AG04450 (cell line): ENCODE measurements at regions of chr16 and their contacts with region 1.

Region 1: GRCh38 chr16:58755989-58756649 is 22.0 kb upstream of the GOT2 start:
- DNase-seq: peak; percentile 38
- H3K4me3 ChIP-seq: no peak overlapping the region
- H3K27ac ChIP-seq: no peak overlapping the region
- H3K27me3 ChIP-seq: peaks cover 4% of the 10 kb centered on the region
- CTCF ChIP-seq: peak; percentile 83

Region 2: DNA sequence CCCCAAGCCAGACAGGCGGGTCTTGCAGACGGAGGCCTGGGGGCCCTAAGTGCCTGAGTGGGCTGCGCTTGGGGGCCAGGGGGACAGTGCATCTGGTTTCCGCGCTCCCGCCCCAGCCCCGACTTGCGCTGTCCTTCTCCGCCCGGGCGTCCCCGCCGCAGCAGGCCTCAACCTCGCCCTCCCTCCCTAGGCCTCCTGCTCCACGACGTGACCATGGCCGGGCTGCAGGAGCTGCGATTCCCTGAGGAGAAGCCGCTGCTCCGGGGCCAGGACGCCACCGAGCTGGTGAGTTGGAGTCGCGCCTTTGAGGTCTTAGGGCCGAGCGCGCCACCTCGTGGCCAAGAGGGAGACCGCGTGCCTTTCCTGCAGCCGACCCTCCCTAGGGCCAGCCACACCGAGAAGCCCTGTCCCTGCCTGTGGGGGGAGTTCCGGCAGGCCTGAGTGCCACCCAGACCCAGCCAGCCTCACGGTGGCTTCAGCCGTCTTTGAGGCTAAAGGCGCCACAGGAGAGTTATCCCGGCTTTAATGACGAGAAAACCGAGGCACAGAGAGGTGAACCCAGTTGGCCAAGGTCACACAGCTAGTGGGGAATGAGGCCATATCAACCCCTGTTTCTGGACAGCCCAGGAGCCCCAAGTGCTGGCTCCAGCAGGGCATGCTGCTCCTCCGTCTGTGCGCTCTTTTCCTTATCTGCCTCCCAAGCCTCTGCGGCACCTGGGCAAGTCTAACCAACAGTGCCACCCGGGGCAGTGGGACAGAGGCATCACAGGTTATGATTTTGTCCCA is 268.4 kb before region 1 on chr16:
- CTCF ChIA-PET with region 1: interaction called, 13 read pairs
- POLR2A ChIA-PET with region 1: no interaction called
- DNase-seq: peak; percentile 38
- H3K4me3 ChIP-seq: 0 out of 2 replicates have a peak overlapping the region, but pooled peaks have one; percentile 4
- H3K27ac ChIP-seq: no peak overlapping the region
- H3K27me3 ChIP-seq: peaks cover 11% of the 10 kb centered on the region
- CTCF ChIP-seq: peak; percentile 84

Region 3: GRCh38 chr16:58661199-58661830 is 94.8 kb before region 1 on chr16:
- CTCF ChIA-PET with region 1: interaction called, 11 read pairs
- POLR2A ChIA-PET with region 1: no interaction called
- DNase-seq: peak; percentile 66
- H3K4me3 ChIP-seq: no peak overlapping the region
- H3K27ac ChIP-seq: no peak overlapping the region
- H3K27me3 ChIP-seq: no peaks in the 10 kb centered on the region
- CTCF ChIP-seq: peak; percentile 81

Region 4: GRCh38 chr16:58678716-58679115 is 77.4 kb before region 1 on chr16:
- CTCF ChIA-PET with region 1: interaction called, 55 read pairs
- POLR2A ChIA-PET with region 1: interaction called, 3 read pairs
- DNase-seq: no peak
- H3K4me3 ChIP-seq: no peak overlapping the region
- H3K27ac ChIP-seq: no peak overlapping the region
- H3K27me3 ChIP-seq: no peaks in the 10 kb centered on the region
- CTCF ChIP-seq: no peak

Region 5: GRCh38 chr16:58684354-58685083 is 71.6 kb before region 1 on chr16 and contains the start of gene SLC38A7:
- CTCF ChIA-PET with region 1: interaction called, 55 read pairs
- POLR2A ChIA-PET with region 1: interaction called, 3 read pairs
- DNase-seq: peak; percentile 59
- H3K4me3 ChIP-seq: peak within 1 kb of the TSS; percentile 99
- H3K27ac ChIP-seq: no peak within 1 kb of the TSS
- H3K27me3 ChIP-seq: no peaks in the 10 kb centered on the region
- CTCF ChIP-seq: no peak
- polyA plus RNA-seq, gene SLC38A7: 11.7 and 15.0 TPM in 2 replicates

Region 6: DNA sequence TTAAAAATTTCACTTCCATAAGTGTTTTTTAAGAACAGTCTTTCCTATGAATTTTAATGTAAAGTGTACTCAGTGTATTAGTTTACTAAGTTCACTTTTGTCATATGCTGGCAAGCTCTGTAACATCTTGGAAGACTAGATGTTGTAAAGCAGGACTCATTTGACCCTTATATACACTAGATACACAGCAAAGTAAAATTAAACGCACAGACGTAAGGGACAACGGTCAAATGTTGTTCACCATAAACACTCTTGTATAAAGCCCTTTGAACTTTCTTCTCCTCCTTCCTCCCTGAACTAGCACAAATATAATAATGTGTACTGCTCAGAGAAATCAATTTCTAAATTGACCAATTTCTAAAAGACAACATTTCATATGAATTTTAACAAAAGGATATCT is 15.0 kb before region 1 on chr16:
- CTCF ChIA-PET with region 1: interaction called, 10 read pairs
- POLR2A ChIA-PET with region 1: no interaction called
- DNase-seq: no peak
- H3K4me3 ChIP-seq: no peak overlapping the region
- H3K27ac ChIP-seq: no peak overlapping the region
- H3K27me3 ChIP-seq: no peaks in the 10 kb centered on the region
- CTCF ChIP-seq: no peak

Region 7: DNA sequence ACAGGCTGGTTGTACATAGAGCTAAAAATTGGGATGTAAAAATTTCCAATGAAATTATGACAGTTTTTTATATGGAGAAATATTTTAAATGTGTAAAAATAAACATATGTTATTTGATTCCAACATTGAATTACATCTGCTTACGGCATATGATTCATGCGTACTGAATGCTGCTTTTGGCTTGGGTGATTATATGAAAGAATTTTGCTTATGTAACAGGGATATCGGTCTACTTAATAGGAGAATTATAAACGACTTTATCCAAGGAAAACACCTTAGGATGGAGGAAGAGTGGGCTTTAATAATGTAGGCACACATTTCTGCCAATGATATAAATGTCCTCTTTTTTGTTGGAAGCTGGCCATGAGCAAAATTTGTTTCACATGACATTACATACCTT is 175.3 kb after region 1 on chr16:
- CTCF ChIA-PET with region 1: no interaction called
- POLR2A ChIA-PET with region 1: no interaction called
- DNase-seq: no peak
- H3K4me3 ChIP-seq: no peak overlapping the region
- H3K27ac ChIP-seq: no peak overlapping the region
- H3K27me3 ChIP-seq: no peaks in the 10 kb centered on the region
- CTCF ChIP-seq: no peak